ENCODE measurements at regions of chrX and their contacts with region 1.

Region 1: GRCh38 chrX:139106069-139106468 is 394.6 kb upstream of the FGF13 start:
- DNase-seq: no peak
- ATAC-seq: no peak; the same call in 1 of the 3 replicates
- H3K4me3 ChIP-seq: no peak overlapping the region
- H3K27ac ChIP-seq: no peak overlapping the region
- H3K4me1 ChIP-seq: no peaks in the 10 kb centered on the region
- H3K27me3 ChIP-seq: no peaks in the 10 kb centered on the region
- CTCF ChIP-seq: no peak
- EP300 ChIP-seq: no peak
- POLR2A ChIP-seq: no peak
- RAD21 ChIP-seq: no peak

Region 2: DNA sequence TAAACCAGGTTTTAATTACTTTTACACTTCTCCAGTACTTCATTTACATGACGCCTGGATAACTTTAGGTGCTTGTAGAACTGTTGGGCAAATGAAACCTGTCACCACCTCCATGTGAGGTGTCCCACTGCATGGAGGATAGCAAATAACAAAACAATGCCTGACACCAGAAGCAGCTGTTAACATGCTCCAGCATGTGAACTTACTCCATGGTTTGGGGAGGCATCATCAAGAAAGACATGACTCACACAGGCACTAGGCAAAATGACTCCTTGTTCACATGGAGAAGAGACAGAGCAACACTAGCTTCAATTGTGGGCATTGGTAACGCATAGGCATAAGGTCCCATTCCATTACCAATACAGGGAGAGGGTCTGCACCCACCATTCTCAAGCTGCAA is 226.4 kb after region 1 on chrX:
- CTCF ChIA-PET with region 1: no interaction called
- POLR2A ChIA-PET with region 1: no interaction called
- in situ Hi-C with region 1: no loop called
- intact Hi-C with region 1: no loop called
- DNase-seq: no peak
- ATAC-seq: no peak
- H3K4me3 ChIP-seq: no peak overlapping the region
- H3K27ac ChIP-seq: no peak overlapping the region
- H3K4me1 ChIP-seq: no peaks in the 10 kb centered on the region
- H3K27me3 ChIP-seq: no peaks in the 10 kb centered on the region
- CTCF ChIP-seq: no peak
- EP300 ChIP-seq: no peak
- POLR2A ChIP-seq: no peak
- RAD21 ChIP-seq: no peak

Region 3: GRCh38 chrX:140480765-140481164 is 1374.7 kb after region 1 on chrX:
- CTCF ChIA-PET with region 1: no interaction called
- POLR2A ChIA-PET with region 1: no interaction called
- in situ Hi-C with region 1: loop called (anchors 25 kb)
- intact Hi-C with region 1: no loop called
- DNase-seq: no peak
- ATAC-seq: no peak
- H3K4me3 ChIP-seq: no peak overlapping the region
- H3K27ac ChIP-seq: no peak overlapping the region
- H3K4me1 ChIP-seq: no peaks in the 10 kb centered on the region
- H3K27me3 ChIP-seq: no peaks in the 10 kb centered on the region
- CTCF ChIP-seq: no peak
- EP300 ChIP-seq: no peak
- POLR2A ChIP-seq: no peak
- RAD21 ChIP-seq: no peak

Measured in K562 (cell line).